Activated B cell treated with CpG ODN at 0.5 μM for 24 hours (primary cell): ENCODE measurements at regions of chr7 and their contacts with region 1.

Region 1: GRCh38 chr7:45136106-45137060 is 21.2 kb upstream of the RAMP3 start:
- DNase-seq: no peak
- ATAC-seq: peak; percentile 92
- H3K4me3 Mint-ChIP-seq: no peak overlapping the region
- H3K27ac Mint-ChIP-seq: no peak overlapping the region
- H3K4me1 Mint-ChIP-seq: peaks cover 11% of the 10 kb centered on the region
- H3K27me3 Mint-ChIP-seq: no peaks in the 10 kb centered on the region
- CTCF ChIP-seq: no peak

Region 2: GRCh38 chr7:44565097-44565794 is 571.1 kb before region 1 on chr7:
- CTCF ChIA-PET with region 1: interaction called, 10 read pairs
- POLR2A ChIA-PET with region 1: no interaction called
- intact Hi-C with region 1: no loop called
- DNase-seq: peak; percentile 63
- ATAC-seq: peak; percentile 98
- H3K4me3 Mint-ChIP-seq: no peak overlapping the region
- H3K27ac Mint-ChIP-seq: peak overlapping the region; percentile 50
- H3K4me1 Mint-ChIP-seq: no peaks in the 10 kb centered on the region
- H3K27me3 Mint-ChIP-seq: no peaks in the 10 kb centered on the region
- CTCF ChIP-seq: peak; percentile 55

Region 3: GRCh38 chr7:44587843-44588711 is 548.3 kb before region 1 on chr7:
- CTCF ChIA-PET with region 1: interaction called, 4 read pairs
- POLR2A ChIA-PET with region 1: interaction called, 3 read pairs
- intact Hi-C with region 1: loop called (anchors 1 kb)
- DNase-seq: no peak
- ATAC-seq: peak; percentile 79
- H3K4me3 Mint-ChIP-seq: no peak overlapping the region
- H3K27ac Mint-ChIP-seq: no peak overlapping the region
- H3K4me1 Mint-ChIP-seq: peaks cover 6% of the 10 kb centered on the region
- H3K27me3 Mint-ChIP-seq: peaks cover 3% of the 10 kb centered on the region
- CTCF ChIP-seq: no peak

Region 4: DNA sequence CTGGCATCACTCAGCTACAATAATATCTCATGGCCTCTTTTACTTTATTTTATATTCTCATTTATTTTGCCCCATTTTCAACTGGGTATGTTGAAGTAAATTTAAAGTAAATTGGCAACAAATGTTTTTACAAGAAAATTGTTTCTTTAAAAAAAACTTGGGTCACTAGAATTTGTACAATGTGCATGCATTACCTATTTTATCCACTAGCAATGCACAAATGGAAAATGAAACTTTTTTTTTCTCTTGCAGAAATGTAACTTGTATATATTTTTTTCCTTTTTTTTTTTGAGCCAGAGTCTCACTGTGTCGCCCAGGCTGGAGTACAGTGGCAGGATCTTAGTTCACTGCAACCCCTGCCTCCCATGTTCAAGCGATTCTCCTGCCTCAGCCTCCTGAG is 278.2 kb before region 1 on chr7:
- CTCF ChIA-PET with region 1: interaction called, 94 read pairs
- POLR2A ChIA-PET with region 1: interaction called, 3 read pairs
- intact Hi-C with region 1: loop called (anchors 1 kb)
- DNase-seq: no peak
- ATAC-seq: no peak
- H3K4me3 Mint-ChIP-seq: no peak overlapping the region
- H3K27ac Mint-ChIP-seq: no peak overlapping the region
- H3K4me1 Mint-ChIP-seq: peaks cover 4% of the 10 kb centered on the region
- H3K27me3 Mint-ChIP-seq: peaks cover 2% of the 10 kb centered on the region
- CTCF ChIP-seq: no peak

Region 5: GRCh38 chr7:44921607-44922359 is 214.6 kb before region 1 on chr7:
- CTCF ChIA-PET with region 1: interaction called, 23 read pairs
- POLR2A ChIA-PET with region 1: no interaction called
- intact Hi-C with region 1: loop called (anchors 1 kb)
- DNase-seq: peak; percentile 89
- ATAC-seq: peak; percentile 98
- H3K4me3 Mint-ChIP-seq: no peak overlapping the region
- H3K27ac Mint-ChIP-seq: no peak overlapping the region
- H3K4me1 Mint-ChIP-seq: peaks cover 3% of the 10 kb centered on the region
- H3K27me3 Mint-ChIP-seq: no peaks in the 10 kb centered on the region
- CTCF ChIP-seq: no peak

Region 6: DNA sequence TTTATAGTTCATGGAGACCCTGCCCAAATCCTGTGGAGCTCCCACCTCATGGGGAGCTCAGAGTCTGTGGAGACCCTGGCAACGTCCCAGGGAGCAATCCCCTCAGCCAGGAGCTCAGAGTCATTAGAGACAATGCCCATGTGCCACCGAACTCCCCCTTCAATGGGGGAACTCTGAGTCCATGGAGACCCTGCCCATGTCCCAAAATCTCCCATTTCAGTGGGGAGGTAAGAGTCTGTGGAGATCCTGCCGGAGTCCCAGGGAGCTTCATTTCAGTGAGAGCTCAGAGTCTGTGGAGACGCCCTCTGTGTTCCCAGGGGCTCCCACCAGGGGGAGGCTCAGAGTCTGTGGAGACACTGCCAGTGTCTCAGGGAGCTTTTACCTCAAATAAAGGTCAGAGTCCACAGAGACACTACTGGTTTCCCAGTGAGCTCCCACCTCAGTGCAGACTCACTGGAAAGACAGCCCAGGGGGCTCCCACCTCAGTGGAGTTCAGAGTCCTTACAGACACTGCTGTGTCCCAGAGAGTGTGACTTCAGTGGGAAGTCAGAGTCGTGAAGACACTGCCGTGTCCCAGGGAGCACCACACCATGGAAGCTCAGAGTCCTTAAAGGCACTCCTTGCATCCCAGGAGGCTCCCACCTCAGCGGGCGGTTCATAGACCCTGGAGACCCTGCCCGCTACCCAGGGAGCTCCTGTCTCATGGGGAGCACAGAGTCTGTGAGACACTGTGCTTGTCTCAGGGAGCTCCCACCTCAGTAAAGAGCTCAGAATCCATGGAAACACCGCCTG is 162.6 kb before region 1 on chr7:
- CTCF ChIA-PET with region 1: interaction called, 100 read pairs
- POLR2A ChIA-PET with region 1: interaction called, 3 read pairs
- intact Hi-C with region 1: loop called (anchors 1 kb)
- DNase-seq: no peak
- ATAC-seq: peak; percentile 26
- H3K4me3 Mint-ChIP-seq: no peak overlapping the region
- H3K27ac Mint-ChIP-seq: no peak overlapping the region
- H3K4me1 Mint-ChIP-seq: peaks cover 32% of the 10 kb centered on the region
- H3K27me3 Mint-ChIP-seq: no peaks in the 10 kb centered on the region
- CTCF ChIP-seq: no peak

Region 7: GRCh38 chr7:45078125-45078681 is 58.2 kb before region 1 on chr7:
- CTCF ChIA-PET with region 1: no interaction called
- POLR2A ChIA-PET with region 1: no interaction called
- intact Hi-C with region 1: loop called (anchors 1 kb)
- DNase-seq: no peak
- ATAC-seq: no peak
- H3K4me3 Mint-ChIP-seq: no peak overlapping the region
- H3K27ac Mint-ChIP-seq: no peak overlapping the region
- H3K4me1 Mint-ChIP-seq: no peaks in the 10 kb centered on the region
- H3K27me3 Mint-ChIP-seq: no peaks in the 10 kb centered on the region
- CTCF ChIP-seq: no peak

Region 8: DNA sequence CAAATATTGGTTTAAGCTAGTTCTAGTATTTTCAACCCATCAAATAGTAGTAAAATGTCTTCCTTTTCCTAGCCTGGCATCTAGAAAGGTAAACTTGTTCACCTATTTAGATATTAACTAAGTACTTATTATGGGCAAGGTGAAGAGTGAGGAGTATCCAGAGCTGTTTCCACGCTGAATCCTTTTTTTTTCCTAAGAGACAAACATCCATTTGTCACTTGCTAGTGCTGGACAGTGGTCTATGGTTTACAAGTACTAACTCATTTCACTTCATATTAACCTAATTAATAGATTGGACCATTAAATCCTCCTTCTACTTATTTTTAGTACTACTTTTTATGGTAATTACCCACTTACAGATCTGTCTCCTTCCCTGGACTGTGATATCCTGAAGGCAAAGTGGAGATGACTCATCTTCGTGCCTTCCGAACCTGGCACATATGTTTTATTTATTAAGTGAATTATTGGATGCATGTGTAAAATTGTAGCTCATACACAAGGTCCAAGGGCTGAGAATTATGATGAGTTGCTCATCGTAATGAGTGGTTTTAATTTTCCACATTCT is 944.3 kb after region 1 on chr7:
- CTCF ChIA-PET with region 1: no interaction called
- POLR2A ChIA-PET with region 1: no interaction called
- intact Hi-C with region 1: no loop called
- DNase-seq: no peak
- ATAC-seq: no peak
- H3K4me3 Mint-ChIP-seq: no peak overlapping the region
- H3K27ac Mint-ChIP-seq: no peak overlapping the region
- H3K4me1 Mint-ChIP-seq: no peaks in the 10 kb centered on the region
- H3K27me3 Mint-ChIP-seq: peaks cover 1% of the 10 kb centered on the region
- CTCF ChIP-seq: no peak